ENCODE measurements at regions of chr18 and their contacts with region 1.

Region 1: GRCh38 chr18:57881818-57882413 is 78.8 kb upstream of the ATP8B1 start:
- DNase-seq: no peak
- H3K4me3 ChIP-seq: no peak overlapping the region
- H3K27ac ChIP-seq: no peak overlapping the region
- H3K4me1 ChIP-seq: peaks cover 0 to 7% (median 6%) of the 10 kb centered on the region in 4 donors
- H3K27me3 ChIP-seq: no peaks in the 10 kb centered on the region
- CTCF ChIP-seq: peak; percentile 86 to 89 (median 88)
- EP300 ChIP-seq: no peak
- POLR2A ChIP-seq: no peak

Region 2: GRCh38 chr18:57618910-57619309 is 263.0 kb before region 1 on chr18:
- intact Hi-C with region 1: no loop called
- DNase-seq: no peak
- H3K4me3 ChIP-seq: no peak overlapping the region
- H3K27ac ChIP-seq: no peak overlapping the region
- H3K4me1 ChIP-seq: peaks cover 25 to 32% (median 27%) of the 10 kb centered on the region in 4 donors
- H3K27me3 ChIP-seq: no peaks in the 10 kb centered on the region
- CTCF ChIP-seq: no peak
- EP300 ChIP-seq: no peak
- POLR2A ChIP-seq: no peak

Region 3: DNA sequence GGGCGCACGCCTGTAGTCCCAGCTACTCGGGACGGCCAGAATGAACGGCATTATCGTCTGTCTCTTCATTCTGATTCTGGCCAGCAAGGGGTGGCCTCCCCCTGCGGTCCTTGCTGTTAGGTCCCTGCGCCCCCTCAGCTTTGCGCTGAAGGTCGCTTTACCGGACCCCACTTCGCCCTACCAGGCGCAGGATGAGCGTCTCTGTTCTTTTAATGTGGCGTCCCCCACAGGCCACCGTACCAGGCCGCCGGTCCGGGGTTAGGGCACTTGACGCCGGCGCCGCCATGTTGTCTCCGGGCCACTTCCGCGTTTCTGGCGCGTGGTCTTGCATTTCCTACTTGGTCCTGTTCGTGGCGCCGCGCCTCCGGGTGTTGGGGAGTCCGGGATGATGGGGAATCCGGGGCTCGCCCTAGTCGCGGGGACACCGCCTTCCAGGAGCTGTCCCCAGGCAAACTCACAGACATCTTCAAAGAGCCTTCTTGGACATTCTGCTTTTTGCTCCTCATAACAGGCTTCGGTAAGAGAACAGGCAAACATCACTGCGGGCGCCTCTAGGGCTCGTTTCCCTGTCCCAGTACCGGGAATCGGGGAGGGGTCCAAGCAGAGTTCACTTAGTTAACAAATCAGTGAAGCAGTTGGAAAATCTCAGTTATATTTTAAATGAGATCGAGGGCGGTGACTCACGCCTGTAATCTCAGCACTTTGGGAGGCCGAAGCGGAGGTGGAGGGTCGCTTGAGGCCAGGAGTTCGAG is 251.7 kb before region 1 on chr18:
- intact Hi-C with region 1: loop called (anchors 10 kb)
- DNase-seq: peak; percentile 99
- H3K4me3 ChIP-seq: peak overlapping the region; percentile 65 to 85 (median 68)
- H3K27ac ChIP-seq: peak overlapping the region; percentile 75 to 79 (median 77)
- H3K4me1 ChIP-seq: peaks cover 10 to 21% (median 18%) of the 10 kb centered on the region in 4 donors
- H3K27me3 ChIP-seq: no peaks in the 10 kb centered on the region
- CTCF ChIP-seq: peak; percentile 76 to 85 (median 82)
- EP300 ChIP-seq: no peak
- POLR2A ChIP-seq: no peak

Region 4: DNA sequence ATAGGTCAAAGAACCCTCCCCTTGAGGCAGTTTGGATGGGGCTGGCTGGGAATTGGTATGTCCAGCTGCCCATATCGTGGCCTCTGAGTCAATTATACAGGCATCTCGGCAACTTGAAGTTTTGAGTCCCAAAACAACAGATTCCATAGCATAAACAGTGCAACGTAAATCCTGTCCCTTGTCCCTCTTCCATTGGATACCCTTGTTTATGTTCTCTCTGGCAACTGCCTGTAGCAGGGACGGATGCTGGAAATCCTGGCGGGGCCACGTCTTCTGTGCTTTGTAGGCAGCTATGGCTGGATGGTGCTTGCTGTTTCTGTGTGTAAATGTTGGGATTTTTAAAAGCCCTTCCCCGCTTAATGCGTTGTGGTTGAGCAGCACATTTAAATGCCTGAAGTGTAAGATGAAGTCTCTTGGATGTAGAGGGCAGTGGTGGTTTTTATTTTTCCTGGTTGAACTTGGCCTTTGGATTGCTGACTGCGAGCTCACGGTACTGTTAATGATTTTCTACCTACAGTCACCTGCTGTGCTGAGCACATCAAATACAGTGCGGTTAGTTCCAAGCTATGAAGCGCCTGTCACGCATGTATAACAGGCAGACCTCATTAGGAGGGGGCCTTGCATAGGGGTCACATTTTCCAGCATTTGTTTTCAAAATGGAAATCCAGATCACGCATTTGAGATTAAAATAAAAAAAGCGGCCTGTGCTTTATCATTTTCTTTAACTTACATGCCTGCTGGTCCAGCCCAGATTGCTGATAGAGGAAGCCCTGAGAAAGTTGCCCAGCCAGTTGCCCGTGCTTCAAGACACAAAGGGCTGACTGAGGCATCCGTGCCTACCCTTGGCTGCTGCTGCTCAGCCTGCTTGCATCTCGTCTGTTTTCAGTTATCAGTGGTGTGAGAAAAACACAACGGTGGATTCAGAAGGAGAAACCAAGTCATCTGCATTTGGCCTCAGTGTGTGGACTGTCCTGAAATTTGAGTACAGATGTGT is 246.8 kb after region 1 on chr18:
- intact Hi-C with region 1: loop called (anchors 5 kb)
- DNase-seq: no peak
- H3K4me3 ChIP-seq: no peak overlapping the region
- H3K27ac ChIP-seq: no peak overlapping the region
- H3K4me1 ChIP-seq: peaks cover 0 to 6% (median 2%) of the 10 kb centered on the region in 4 donors
- H3K27me3 ChIP-seq: no peaks in the 10 kb centered on the region
- CTCF ChIP-seq: no peak
- EP300 ChIP-seq: no peak
- POLR2A ChIP-seq: no peak

Region 5: GRCh38 chr18:58316396-58317342 is 434.8 kb after region 1 on chr18:
- intact Hi-C with region 1: loop called (anchors 5 kb)
- DNase-seq: no peak
- H3K4me3 ChIP-seq: no peak overlapping the region
- H3K27ac ChIP-seq: peak overlapping the region; percentile 77 to 81 (median 78)
- H3K4me1 ChIP-seq: peaks cover 41 to 58% (median 54%) of the 10 kb centered on the region in 4 donors
- H3K27me3 ChIP-seq: no peaks in the 10 kb centered on the region
- CTCF ChIP-seq: no peak
- EP300 ChIP-seq: peak; percentile 11
- POLR2A ChIP-seq: no peak

Measured in esophagus muscularis mucosa (tissue), 4 donors.